ENCODE measurements at regions of chr19 and their contacts with region 1.

Region 1: GRCh38 chr19:1672038-1672768 is 19.8 kb upstream of the TCF3 start:
- DNase-seq: no peak
- H3K4me3 ChIP-seq: no peak overlapping the region
- H3K27ac ChIP-seq: no peak overlapping the region
- H3K4me1 ChIP-seq: peaks cover 0 to 24% (median 16%) of the 10 kb centered on the region in 4 donors
- H3K27me3 ChIP-seq: peaks cover 5 to 97% of the 10 kb centered on the region in 2 donors
- CTCF ChIP-seq: peak; percentile 63 to 84

Region 2: GRCh38 chr19:1551068-1552040 is 120.8 kb before region 1 on chr19:
- intact Hi-C with region 1: loop called (anchors 2 kb)
- DNase-seq: no peak
- H3K4me3 ChIP-seq: no peak overlapping the region
- H3K27ac ChIP-seq: no peak overlapping the region
- H3K4me1 ChIP-seq: peaks cover 0 to 1% (median 0%) of the 10 kb centered on the region in 4 donors
- H3K27me3 ChIP-seq: peaks cover 0 to 16% of the 10 kb centered on the region in 2 donors
- CTCF ChIP-seq: no peak

Region 3: GRCh38 chr19:1592755-1593500 is 79.3 kb before region 1 on chr19 and contains the start of gene MBD3:
- intact Hi-C with region 1: no loop called
- DNase-seq: peak; percentile 90 to 96
- H3K4me3 ChIP-seq: peak within 1 kb of the TSS; percentile 58 to 71
- H3K27ac ChIP-seq: peak within 1 kb of the TSS; percentile 83 to 89
- H3K4me1 ChIP-seq: peaks cover 0 to 33% (median 23%) of the 10 kb centered on the region in 4 donors
- H3K27me3 ChIP-seq: no peaks in the 10 kb centered on the region
- CTCF ChIP-seq: peak; percentile 17 to 43

Region 4: DNA sequence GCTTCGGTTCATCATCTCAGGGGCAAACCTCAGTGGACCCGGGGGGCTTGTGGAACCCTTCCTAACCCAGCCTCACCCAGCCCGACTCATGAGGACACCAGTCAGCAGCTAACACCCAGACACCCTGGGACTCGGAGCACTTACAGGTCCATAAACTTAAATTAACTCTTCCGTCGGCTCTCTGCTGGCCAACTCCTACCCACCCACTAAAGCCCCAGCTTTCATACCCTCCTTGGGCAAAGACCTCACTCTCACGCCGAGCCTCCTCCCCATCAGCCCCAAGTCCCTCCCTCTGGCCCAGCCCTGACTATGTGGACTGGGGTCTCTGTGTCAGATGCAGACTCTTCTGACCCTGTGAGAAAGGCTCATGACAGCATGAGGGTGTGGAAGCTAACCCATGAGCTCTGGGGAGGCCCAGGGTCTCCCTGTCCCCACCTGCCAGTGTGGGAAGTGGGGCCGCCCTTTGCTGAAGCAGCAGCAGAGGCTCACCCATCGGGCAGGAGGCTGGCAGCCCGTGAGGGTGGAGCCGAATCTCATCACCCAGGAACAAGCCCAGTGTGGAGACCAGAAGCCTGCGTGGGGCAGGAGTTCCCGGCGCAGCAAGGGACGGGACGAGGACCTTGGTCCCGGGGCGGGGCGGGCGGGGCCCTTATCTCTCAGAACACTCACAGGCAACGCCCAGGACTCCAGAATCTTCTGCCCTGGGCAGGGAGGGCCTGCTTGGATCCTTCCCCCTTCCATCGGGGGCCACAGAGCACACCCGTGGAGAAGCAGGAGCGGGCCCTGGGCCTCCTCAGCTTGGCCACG is 39.5 kb before region 1 on chr19:
- intact Hi-C with region 1: loop called (anchors 5 kb)
- DNase-seq: no peak
- H3K4me3 ChIP-seq: no peak overlapping the region
- H3K27ac ChIP-seq: no peak overlapping the region
- H3K4me1 ChIP-seq: no peaks in the 10 kb centered on the region
- H3K27me3 ChIP-seq: no peaks in the 10 kb centered on the region
- CTCF ChIP-seq: no peak

Region 5: DNA sequence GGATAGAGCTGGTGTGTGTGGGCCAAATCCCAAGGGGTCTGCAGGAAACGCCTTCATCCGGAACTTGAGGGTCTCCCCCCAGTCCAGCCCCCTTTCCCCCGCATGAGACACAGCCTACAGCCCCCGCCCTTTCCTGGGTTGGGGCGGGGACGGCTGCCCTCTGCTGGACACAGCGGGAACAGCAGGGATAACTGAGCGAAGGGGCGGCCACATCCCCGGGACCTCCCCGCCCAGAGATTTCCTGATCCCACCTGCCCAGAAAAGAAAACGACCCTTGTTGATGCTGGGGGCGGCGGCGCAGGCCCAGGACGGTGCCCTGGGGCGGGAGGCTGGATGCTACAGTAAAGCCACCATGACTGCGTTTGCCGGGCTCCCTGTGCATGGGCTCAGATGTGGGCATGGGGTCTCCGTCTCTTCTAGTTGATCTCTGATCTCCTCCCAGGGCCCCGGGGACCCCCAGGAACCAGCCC is 95.3 kb after region 1 on chr19:
- intact Hi-C with region 1: loop called (anchors 5 kb)
- DNase-seq: no peak
- H3K4me3 ChIP-seq: no peak overlapping the region
- H3K27ac ChIP-seq: no peak overlapping the region
- H3K4me1 ChIP-seq: no peaks in the 10 kb centered on the region
- H3K27me3 ChIP-seq: peaks cover 0 to 96% of the 10 kb centered on the region in 2 donors
- CTCF ChIP-seq: peak; percentile 85 to 96